AG04450 (cell line): ENCODE measurements at regions of chr7 and their contacts with region 1.

Region 1: DNA sequence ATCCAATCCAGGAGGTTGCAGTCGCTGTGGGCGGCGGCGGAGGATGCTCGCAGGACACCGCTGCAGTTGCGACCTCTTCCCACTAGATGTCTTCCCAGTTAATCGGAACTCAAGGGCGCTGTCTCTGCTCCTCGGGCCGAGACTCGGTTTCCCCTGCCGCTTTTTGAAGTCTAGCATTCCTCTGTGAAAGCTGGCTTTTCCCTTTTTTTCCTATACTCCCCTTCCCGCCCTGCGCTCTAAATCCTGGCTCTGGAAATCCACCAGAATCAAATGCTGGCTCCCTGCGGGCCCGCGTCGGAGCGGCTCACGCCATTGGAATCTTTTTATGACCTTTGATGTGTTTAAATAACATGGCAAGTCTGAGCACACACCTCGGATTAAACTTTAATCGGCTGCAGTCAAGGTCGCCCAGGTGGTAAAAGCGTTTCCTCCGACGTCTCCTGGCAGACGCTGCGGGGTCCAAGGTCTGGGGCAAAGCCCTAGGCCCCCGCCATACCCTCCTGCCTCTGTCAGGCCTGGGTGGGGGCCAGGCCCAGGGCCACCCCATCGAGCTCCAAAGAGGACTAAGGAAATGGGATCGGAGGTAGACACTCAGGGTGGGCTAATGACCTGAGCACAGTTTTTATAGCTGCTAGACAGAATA is 10.7 kb upstream of the HOXA13 start:
- DNase-seq: no peak
- H3K4me3 ChIP-seq: peak overlapping the region; percentile 37
- H3K27ac ChIP-seq: no peak overlapping the region
- H3K27me3 ChIP-seq: peaks cover 98% of the 10 kb centered on the region
- CTCF ChIP-seq: peak; percentile 81

Region 2: GRCh38 chr7:27179503-27180430 is 30.8 kb before region 1 on chr7:
- CTCF ChIA-PET with region 1: interaction called, 11 read pairs
- POLR2A ChIA-PET with region 1: no interaction called
- DNase-seq: no peak
- H3K4me3 ChIP-seq: peak overlapping the region; percentile 32
- H3K27ac ChIP-seq: no peak overlapping the region
- H3K27me3 ChIP-seq: peaks cover 92% of the 10 kb centered on the region
- CTCF ChIP-seq: peak; percentile 90

Region 3: GRCh38 chr7:27248911-27249723 is 38.6 kb after region 1 on chr7:
- CTCF ChIA-PET with region 1: no interaction called
- POLR2A ChIA-PET with region 1: no interaction called
- DNase-seq: no peak
- H3K4me3 ChIP-seq: no peak overlapping the region
- H3K27ac ChIP-seq: no peak overlapping the region
- H3K27me3 ChIP-seq: peaks cover 98% of the 10 kb centered on the region
- CTCF ChIP-seq: no peak

Region 4: GRCh38 chr7:27576360-27576944 is 365.9 kb after region 1 on chr7:
- CTCF ChIA-PET with region 1: interaction called, 32 read pairs
- POLR2A ChIA-PET with region 1: no interaction called
- DNase-seq: peak; percentile 3
- H3K4me3 ChIP-seq: no peak overlapping the region
- H3K27ac ChIP-seq: no peak overlapping the region
- H3K27me3 ChIP-seq: no peaks in the 10 kb centered on the region
- CTCF ChIP-seq: peak; percentile 58

Region 5: DNA sequence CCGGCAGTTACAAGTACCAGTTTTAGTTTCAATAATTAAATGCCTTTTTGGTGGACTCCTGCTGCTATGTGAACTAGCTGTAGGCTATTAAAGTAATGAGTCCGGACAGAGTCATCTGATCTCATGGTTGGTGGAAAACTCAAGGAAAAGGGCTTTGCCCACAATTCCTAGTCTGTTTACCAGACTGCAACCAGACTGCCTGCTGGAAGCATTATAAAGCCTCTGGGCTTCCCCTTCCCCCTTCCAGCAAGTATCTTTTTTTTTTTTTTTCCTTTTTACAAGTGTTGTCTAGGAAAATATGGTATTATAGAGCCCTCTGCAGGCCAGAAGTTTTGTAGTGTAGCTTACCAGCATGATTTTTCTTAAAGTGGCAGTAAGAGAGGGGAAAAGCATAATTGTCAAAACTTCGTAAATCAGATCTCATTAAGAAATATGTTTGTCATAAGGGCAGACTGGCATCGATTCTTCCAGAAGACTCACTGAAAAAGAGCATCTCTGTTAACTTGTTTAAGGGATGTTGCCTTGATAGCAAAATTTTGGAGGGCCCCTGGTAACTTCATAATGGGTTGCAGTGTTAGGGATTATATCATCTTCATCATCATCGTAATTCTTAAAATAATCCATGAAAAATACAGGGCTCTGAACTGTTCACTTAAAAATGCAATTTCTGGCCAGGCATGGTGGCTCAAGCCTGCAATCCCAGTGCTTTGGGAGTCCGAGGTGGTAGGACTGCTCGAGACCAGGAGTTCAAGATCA is 710.7 kb after region 1 on chr7:
- CTCF ChIA-PET with region 1: interaction called, 16 read pairs
- POLR2A ChIA-PET with region 1: no interaction called
- DNase-seq: peak; percentile 76
- H3K4me3 ChIP-seq: no peak overlapping the region
- H3K27ac ChIP-seq: no peak overlapping the region
- H3K27me3 ChIP-seq: no peaks in the 10 kb centered on the region
- CTCF ChIP-seq: peak; percentile 60